Aorta (tissue), 5 donors: ENCODE measurements at regions of chr5 and their contacts with region 1.

Region 1: GRCh38 chr5:72816311-72817145 is at the start of gene TNPO1:
- DNase-seq: peak; percentile 96 to 97
- ATAC-seq: peak; percentile 98
- H3K4me3 ChIP-seq: peak within 1 kb of the TSS; percentile 53 to 64
- H3K27ac ChIP-seq: peak within 1 kb of the TSS; percentile 78 to 94
- H3K4me1 ChIP-seq: no peaks in the 10 kb centered on the region
- H3K27me3 ChIP-seq: no peaks in the 10 kb centered on the region
- total RNA-seq, gene TNPO1: 92.9 to 113 TPM

Region 2: GRCh38 chr5:72611118-72611730 is 205.3 kb before region 1 on chr5:
- intact Hi-C with region 1: loop called (anchors 5 to 10 kb)
- DNase-seq: peak; percentile 81 to 88
- ATAC-seq: peak; percentile 88
- H3K4me3 ChIP-seq: no peak overlapping the region
- H3K27ac ChIP-seq: no peak overlapping the region
- H3K4me1 ChIP-seq: no peaks in the 10 kb centered on the region
- H3K27me3 ChIP-seq: no peaks in the 10 kb centered on the region

Region 3: GRCh38 chr5:72859127-72859526 is 42.6 kb after region 1 on chr5:
- intact Hi-C with region 1: loop called (anchors 5 kb)
- DNase-seq: no peak
- ATAC-seq: no peak
- H3K4me3 ChIP-seq: no peak overlapping the region
- H3K27ac ChIP-seq: no peak overlapping the region
- H3K4me1 ChIP-seq: peaks cover 0 to 3% of the 10 kb centered on the region in 2 donors
- H3K27me3 ChIP-seq: no peaks in the 10 kb centered on the region